ENCODE measurements at regions of chr2 and their contacts with region 1.

Region 1: DNA sequence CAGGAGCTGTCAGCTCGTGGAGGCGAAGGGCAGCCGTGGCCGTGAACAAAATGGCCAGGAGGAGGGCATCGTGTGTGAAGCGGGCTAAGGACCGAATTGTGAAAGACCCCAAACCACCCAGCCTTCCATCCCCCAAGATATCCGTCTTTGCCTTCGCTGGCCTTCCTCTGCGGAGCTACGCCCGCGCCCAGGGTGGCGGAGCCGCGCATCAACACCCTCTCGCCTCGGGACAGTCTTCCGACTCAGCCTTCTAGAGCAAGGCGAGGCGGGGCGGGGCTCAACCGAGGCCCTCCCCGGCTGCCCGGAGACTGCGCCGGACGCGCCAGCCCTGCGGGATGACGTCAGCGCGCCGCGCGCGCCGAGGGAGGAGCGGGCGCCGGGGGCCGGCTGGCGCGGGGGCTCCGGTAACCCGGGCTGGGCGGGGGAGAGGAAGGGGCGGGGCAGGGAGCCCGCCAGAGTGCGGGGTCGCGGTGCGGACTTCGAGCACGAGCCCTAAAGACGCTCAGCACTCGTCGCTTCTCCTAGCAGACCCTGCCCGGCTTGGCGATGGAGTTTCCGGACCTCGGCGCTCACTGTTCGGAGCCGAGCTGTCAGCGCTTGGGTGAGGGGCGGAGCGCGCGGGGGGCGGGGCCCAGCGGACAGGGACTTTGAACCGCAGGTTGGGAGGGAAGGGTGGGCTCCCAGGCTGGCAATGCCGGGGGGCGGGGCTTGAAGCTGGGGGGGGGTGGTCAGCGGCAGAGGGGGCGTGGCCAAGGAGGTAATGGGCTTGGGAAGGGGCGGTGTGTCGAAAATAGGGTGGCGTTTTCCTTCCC is at the start of gene ZFAND2B:
- DNase-seq: peak; percentile 93 to 98 (median 95)
- H3K4me3 ChIP-seq: peak within 1 kb of the TSS; percentile 67 to 88
- H3K4me3 Mint-ChIP-seq: peak within 1 kb of the TSS; percentile 88 to 95 (median 94)
- H3K27ac ChIP-seq: peak within 1 kb of the TSS; percentile 87
- H3K27ac Mint-ChIP-seq: peak within 1 kb of the TSS; percentile 93 to 98 (median 97)
- H3K4me1 ChIP-seq: peaks cover 39% of the 10 kb centered on the region
- H3K4me1 Mint-ChIP-seq: peaks cover 22 to 54% (median 37%) of the 10 kb centered on the region in 4 donors
- H3K27me3 ChIP-seq: no peaks in the 10 kb centered on the region
- H3K27me3 Mint-ChIP-seq: no peaks in the 10 kb centered on the region
- total RNA-seq, gene ZFAND2B: 73.3 to 79.8 TPM

Region 2: DNA sequence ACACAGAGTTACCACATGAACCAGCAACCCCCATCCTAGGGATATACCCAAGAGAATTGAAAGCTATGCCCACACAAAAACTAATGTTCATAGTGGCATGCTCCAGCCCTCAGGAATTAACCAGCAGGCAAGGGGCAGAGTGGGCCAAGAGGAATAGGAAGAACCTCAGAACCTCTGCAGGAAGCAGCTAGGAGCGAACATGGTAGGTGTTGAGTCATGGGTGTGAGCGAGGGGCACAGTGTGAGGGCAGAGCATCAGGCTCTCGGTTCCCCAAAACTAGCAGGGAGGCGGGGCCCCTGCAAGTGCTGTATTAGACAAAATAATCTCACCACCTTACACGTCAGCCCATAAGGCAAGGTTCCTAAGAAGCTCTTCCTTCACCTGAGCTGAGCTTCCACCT is 1143.2 kb before region 1 on chr2:
- CTCF ChIA-PET with region 1: no interaction called
- POLR2A ChIA-PET with region 1: no interaction called
- intact Hi-C with region 1: no loop called
- DNase-seq: no peak
- H3K4me3 ChIP-seq: no peak overlapping the region
- H3K4me3 Mint-ChIP-seq: no peak overlapping the region
- H3K27ac ChIP-seq: no peak overlapping the region
- H3K27ac Mint-ChIP-seq: peak overlapping the region in 1 of 7 donors; percentile 33
- H3K4me1 ChIP-seq: peaks cover 1% of the 10 kb centered on the region
- H3K4me1 Mint-ChIP-seq: peaks cover 0 to 2% (median 1%) of the 10 kb centered on the region in 4 donors
- H3K27me3 ChIP-seq: no peaks in the 10 kb centered on the region
- H3K27me3 Mint-ChIP-seq: peaks cover 14 to 38% of the 10 kb centered on the region in 2 donors

Region 3: GRCh38 chr2:219171231-219171651 is 35.4 kb before region 1 on chr2:
- CTCF ChIA-PET with region 1: interaction called, 253 read pairs
- POLR2A ChIA-PET with region 1: interaction called, 424 read pairs
- intact Hi-C with region 1: loop called (anchors 1 kb)
- DNase-seq: peak; percentile 39 to 58 (median 49)
- H3K4me3 ChIP-seq: no peak overlapping the region
- H3K4me3 Mint-ChIP-seq: peak overlapping the region in 1 of 8 donors; percentile 25
- H3K27ac ChIP-seq: no peak overlapping the region
- H3K27ac Mint-ChIP-seq: peak overlapping the region; percentile 35 to 91 (median 75)
- H3K4me1 ChIP-seq: peaks cover 31% of the 10 kb centered on the region
- H3K4me1 Mint-ChIP-seq: peaks cover 15 to 46% (median 31%) of the 10 kb centered on the region in 4 donors
- H3K27me3 ChIP-seq: no peaks in the 10 kb centered on the region
- H3K27me3 Mint-ChIP-seq: no peaks in the 10 kb centered on the region

Region 4: GRCh38 chr2:219186754-219187456 is 19.7 kb before region 1 on chr2:
- CTCF ChIA-PET with region 1: interaction called, 7 read pairs
- POLR2A ChIA-PET with region 1: interaction called, 44 read pairs
- intact Hi-C with region 1: no loop called
- DNase-seq: no peak
- H3K4me3 ChIP-seq: no peak overlapping the region
- H3K4me3 Mint-ChIP-seq: no peak overlapping the region
- H3K27ac ChIP-seq: no peak overlapping the region
- H3K27ac Mint-ChIP-seq: peak overlapping the region in 5 of 7 donors; percentile 30 to 55 (median 49)
- H3K4me1 ChIP-seq: peaks cover 13% of the 10 kb centered on the region
- H3K4me1 Mint-ChIP-seq: peaks cover 8 to 20% (median 8%) of the 10 kb centered on the region in 4 donors
- H3K27me3 ChIP-seq: no peaks in the 10 kb centered on the region
- H3K27me3 Mint-ChIP-seq: no peaks in the 10 kb centered on the region

Region 5: GRCh38 chr2:219229305-219230058 is 22.8 kb after region 1 on chr2 and contains the starts of genes ANKZF1 and ATG9A:
- CTCF ChIA-PET with region 1: interaction called, 18 read pairs
- POLR2A ChIA-PET with region 1: interaction called, 39 read pairs
- intact Hi-C with region 1: loop called (anchors 1 kb)
- DNase-seq: peak; percentile 98 to 100 (median 99)
- H3K4me3 ChIP-seq: peak within 1 kb of the TSS; percentile 63 to 69
- H3K4me3 Mint-ChIP-seq: peak within 1 kb of the TSS; percentile 94 to 99 (median 96)
- H3K27ac ChIP-seq: peak within 1 kb of the TSS; percentile 87
- H3K27ac Mint-ChIP-seq: peak within 1 kb of the TSS; percentile 94 to 98 (median 96)
- H3K4me1 ChIP-seq: peaks cover 49% of the 10 kb centered on the region
- H3K4me1 Mint-ChIP-seq: peaks cover 28 to 82% (median 51%) of the 10 kb centered on the region in 4 donors
- H3K27me3 ChIP-seq: no peaks in the 10 kb centered on the region
- H3K27me3 Mint-ChIP-seq: no peaks in the 10 kb centered on the region
- total RNA-seq, gene ANKZF1: 244 to 260 TPM
- total RNA-seq, gene ATG9A: 48.7 to 53.0 TPM

Region 6: DNA sequence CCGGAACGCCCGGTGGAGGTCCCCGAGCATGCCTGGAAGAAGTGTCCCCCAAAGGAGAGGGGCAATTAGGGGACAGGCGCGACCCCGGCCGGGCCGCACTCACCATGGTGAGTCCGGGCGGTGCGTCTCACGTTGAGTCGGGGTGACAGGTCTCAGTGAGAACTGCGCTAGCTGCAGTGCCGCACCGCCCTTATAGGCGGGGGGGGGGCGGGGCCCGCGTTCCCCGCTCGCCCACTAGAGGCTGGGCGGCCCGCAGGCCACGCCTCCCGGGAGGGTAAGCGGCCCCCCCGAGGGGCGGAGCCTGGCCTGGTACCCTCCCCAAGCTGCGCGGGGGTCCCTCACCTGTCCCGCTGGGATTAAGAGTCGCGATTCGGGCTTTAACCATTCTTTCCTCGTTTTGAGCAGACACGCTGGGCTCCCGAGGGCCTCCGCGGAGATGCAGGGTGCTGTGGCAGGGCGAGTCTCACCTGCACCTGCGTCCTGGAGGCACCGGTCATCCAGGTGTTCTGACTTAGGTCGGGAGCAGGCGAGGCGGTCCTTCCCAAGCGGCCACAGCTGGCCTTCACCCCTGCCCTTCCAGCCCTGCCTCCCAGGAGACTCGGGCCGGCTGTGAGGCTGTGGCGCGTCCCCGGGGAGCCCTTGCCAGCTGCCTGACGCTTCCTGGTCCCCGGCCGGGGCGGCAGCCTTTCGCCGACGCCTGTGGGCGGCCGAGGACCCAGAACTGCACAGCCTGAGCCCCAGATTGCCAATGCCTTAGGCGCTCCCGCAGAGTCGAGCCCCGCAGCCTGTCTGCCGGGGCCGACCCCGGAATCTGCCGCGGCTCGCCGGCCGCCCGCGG is 47.3 kb after region 1 on chr2 and contains the start of gene TUBA4A:
- CTCF ChIA-PET with region 1: interaction called, 11 read pairs
- POLR2A ChIA-PET with region 1: interaction called, 60 read pairs
- intact Hi-C with region 1: loop called (anchors 1 kb)
- DNase-seq: peak; percentile 89 to 90 (median 90)
- H3K4me3 ChIP-seq: peak within 1 kb of the TSS; percentile 94 to 100
- H3K4me3 Mint-ChIP-seq: peak within 1 kb of the TSS; percentile 85 to 99 (median 94)
- H3K27ac ChIP-seq: peak within 1 kb of the TSS; percentile 87
- H3K27ac Mint-ChIP-seq: peak within 1 kb of the TSS; percentile 92 to 98 (median 97)
- H3K4me1 ChIP-seq: peaks cover 42% of the 10 kb centered on the region
- H3K4me1 Mint-ChIP-seq: peaks cover 34 to 60% (median 45%) of the 10 kb centered on the region in 4 donors
- H3K27me3 ChIP-seq: no peaks in the 10 kb centered on the region
- H3K27me3 Mint-ChIP-seq: no peaks in the 10 kb centered on the region
- total RNA-seq, gene TUBA4A: 242 to 259 TPM

Region 7: DNA sequence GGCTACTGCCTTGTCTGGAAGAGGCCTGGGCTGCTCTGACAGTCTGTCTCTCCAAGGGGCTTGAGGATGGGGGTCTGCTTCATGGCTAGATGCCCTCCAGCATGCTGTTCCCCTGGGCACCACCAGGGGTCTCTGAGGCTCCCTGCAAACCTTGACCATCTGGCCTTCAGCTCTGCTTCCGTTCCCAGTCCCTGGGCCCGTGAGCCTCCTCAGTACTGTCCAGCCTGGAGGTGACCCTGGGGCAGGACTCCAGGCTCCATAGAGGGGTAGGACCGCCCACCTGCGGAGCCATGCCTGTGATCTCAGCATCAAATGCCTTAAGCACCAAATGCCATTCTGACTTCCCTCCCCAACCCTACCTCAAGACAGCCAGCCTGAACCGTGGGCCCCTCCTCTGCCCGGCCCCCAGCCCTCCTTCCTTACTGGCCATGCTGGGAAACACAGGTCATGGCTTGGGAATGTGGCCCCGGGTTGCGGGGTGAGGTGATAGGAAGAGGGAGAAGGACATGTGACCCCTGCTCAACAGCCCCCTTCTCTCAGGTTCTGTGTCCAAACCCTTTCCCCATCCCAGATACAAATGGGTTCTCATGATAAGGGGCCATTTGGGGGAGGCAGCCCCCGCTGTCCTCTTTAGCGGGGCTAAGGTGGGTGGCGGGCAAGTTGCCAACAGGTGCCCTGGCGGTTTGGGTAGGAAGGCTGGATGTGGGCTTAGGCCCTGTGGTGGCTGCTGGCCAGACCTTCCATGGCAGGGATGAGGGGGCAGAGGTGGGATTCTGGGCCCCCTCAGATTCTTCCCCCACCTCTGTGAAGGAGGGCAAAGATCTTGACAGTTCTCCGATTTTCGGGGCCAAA is 253.0 kb after region 1 on chr2:
- CTCF ChIA-PET with region 1: no interaction called
- POLR2A ChIA-PET with region 1: no interaction called
- intact Hi-C with region 1: no loop called
- DNase-seq: peak in 1 of 5 donors; percentile 36
- H3K4me3 ChIP-seq: no peak overlapping the region
- H3K4me3 Mint-ChIP-seq: no peak overlapping the region
- H3K27ac ChIP-seq: no peak overlapping the region
- H3K27ac Mint-ChIP-seq: no peak overlapping the region
- H3K4me1 ChIP-seq: no peaks in the 10 kb centered on the region
- H3K4me1 Mint-ChIP-seq: peaks cover 5 to 7% (median 6%) of the 10 kb centered on the region in 4 donors
- H3K27me3 ChIP-seq: no peaks in the 10 kb centered on the region
- H3K27me3 Mint-ChIP-seq: peaks cover 0 to 4% of the 10 kb centered on the region in 2 donors

Measured in CD4-positive, alpha-beta memory T cell (primary cell).